A673 (cell line): ENCODE measurements at regions of chr6 and their contacts with region 1.

Region 1: GRCh38 chr6:112780498-112781096 is 433.5 kb downstream of the RFPL4B start:
- DNase-seq: peak; percentile 88
- H3K4me3 ChIP-seq: no peak overlapping the region
- H3K27ac ChIP-seq: no peak overlapping the region
- H3K4me1 ChIP-seq: peaks cover 5% of the 10 kb centered on the region
- H3K27me3 ChIP-seq: no peaks in the 10 kb centered on the region
- CTCF ChIP-seq: peak; percentile 82

Region 2: DNA sequence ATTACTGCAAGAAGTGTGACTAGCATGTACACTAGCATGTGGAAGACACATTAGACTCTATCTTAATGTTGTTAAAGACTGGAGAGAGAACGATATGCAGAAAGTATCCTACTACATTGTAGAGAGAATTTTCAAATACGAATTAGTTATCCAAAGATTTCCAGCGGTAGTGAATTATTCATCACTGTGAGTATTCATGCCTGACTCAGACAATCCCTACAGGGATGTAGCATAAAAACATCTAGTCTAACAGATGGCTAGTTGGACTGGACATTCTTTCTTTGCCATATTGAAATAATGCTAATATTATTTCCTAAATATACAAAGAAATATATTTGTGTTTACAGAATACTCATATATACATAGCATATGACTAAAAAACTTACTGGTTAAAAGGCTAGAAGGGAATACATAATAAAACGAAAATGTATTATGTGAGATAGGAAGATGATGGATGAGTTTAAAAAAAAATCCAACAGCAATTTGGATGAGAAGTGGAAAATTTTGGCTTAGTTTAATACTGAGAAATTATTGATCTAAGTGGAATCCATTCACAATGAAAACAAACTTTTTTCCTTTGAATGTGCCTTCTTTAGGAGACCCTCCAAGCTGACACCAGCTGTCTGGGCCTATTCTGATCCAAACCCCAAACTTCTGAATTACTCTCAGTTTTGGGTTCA is 147.2 kb after region 1 on chr6:
- CTCF ChIA-PET with region 1: no interaction called
- POLR2A ChIA-PET with region 1: no interaction called
- intact Hi-C with region 1: loop called (anchors 10 kb)
- DNase-seq: no peak
- H3K4me3 ChIP-seq: no peak overlapping the region
- H3K27ac ChIP-seq: no peak overlapping the region
- H3K4me1 ChIP-seq: peaks cover 3% of the 10 kb centered on the region
- H3K27me3 ChIP-seq: no peaks in the 10 kb centered on the region
- CTCF ChIP-seq: no peak

Region 3: DNA sequence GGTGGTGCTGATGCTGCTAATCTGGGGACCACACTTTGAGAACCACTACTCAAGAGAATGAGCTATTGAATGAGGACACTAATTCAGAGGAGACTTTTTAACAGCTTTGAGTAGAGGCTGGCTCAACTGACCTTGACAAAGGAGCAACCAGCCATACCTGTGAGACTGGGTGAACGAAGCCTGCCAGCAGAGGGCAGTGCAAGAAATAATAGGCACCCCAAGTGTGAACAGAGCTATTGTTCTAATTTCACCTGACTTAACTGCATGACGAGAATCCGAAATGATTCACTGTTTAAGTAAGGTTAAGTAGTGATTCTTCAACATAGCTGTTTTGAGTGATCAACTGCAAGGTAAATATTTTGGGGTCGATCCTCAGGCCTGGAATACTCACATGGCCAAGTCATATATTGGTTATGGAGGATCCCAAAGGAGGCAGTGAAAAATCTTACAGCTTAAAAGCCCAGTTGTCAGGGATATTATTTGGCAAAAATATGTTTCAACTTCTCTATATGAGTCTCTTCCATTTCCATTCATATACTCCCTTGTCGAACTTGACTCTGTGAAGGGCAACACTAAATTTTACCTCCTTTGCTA is 526.1 kb after region 1 on chr6:
- CTCF ChIA-PET with region 1: no interaction called
- POLR2A ChIA-PET with region 1: no interaction called
- intact Hi-C with region 1: loop called (anchors 10 kb)
- DNase-seq: peak; percentile 36
- H3K4me3 ChIP-seq: no peak overlapping the region
- H3K27ac ChIP-seq: no peak overlapping the region
- H3K4me1 ChIP-seq: no peaks in the 10 kb centered on the region
- H3K27me3 ChIP-seq: no peaks in the 10 kb centered on the region
- CTCF ChIP-seq: peak; percentile 77

Region 4: DNA sequence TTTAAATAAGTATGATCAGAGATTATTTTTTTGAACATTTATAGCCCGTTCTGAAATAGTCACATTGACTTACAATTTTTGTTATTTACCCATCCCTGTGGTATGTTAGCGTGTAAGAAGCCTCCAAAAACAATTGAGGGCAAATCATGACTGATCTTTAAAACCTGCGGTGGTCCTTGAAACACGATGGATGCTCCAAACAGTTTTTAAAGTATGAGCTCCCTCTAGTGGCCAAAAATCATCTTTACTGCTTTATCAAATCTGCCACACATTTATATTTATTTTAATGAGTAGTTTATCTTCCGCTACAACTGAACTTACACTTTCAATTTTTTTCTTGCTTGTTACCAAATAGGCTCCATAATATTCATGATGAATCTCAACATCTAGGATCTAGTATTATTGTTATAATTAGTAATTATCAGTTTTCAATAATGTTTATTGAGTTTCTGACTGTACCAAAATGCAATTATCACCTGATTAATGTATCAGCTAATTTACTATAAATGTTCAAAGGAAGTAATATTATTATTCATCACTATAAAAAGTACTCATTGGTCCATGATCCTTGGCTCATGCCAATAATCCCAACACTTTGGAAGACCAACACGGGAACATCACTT is 1128.7 kb after region 1 on chr6:
- CTCF ChIA-PET with region 1: no interaction called
- POLR2A ChIA-PET with region 1: no interaction called
- intact Hi-C with region 1: loop called (anchors 5 kb)
- DNase-seq: peak; percentile 79
- H3K4me3 ChIP-seq: no peak overlapping the region
- H3K27ac ChIP-seq: no peak overlapping the region
- H3K4me1 ChIP-seq: no peaks in the 10 kb centered on the region
- H3K27me3 ChIP-seq: no peaks in the 10 kb centered on the region
- CTCF ChIP-seq: peak; percentile 73